CD8-positive, alpha-beta T cell (primary cell): ENCODE measurements at regions of chr16 and their contacts with region 1.

Region 1: GRCh38 chr16:69123910-69124309 is 8.5 kb downstream of the CHTF8 start:
- DNase-seq: peak; percentile 28 to 84 (median 65)
- ATAC-seq: peak; percentile 89
- H3K4me3 ChIP-seq: no peak overlapping the region
- H3K4me3 Mint-ChIP-seq: no peak overlapping the region
- H3K27ac ChIP-seq: no peak overlapping the region
- H3K27ac Mint-ChIP-seq: no peak overlapping the region
- H3K4me1 ChIP-seq: no peaks in the 10 kb centered on the region
- H3K4me1 Mint-ChIP-seq: peaks cover 28% of the 10 kb centered on the region
- H3K27me3 ChIP-seq: no peaks in the 10 kb centered on the region
- H3K27me3 Mint-ChIP-seq: no peaks in the 10 kb centered on the region
- CTCF ChIP-seq: peak; percentile 83

Region 2: DNA sequence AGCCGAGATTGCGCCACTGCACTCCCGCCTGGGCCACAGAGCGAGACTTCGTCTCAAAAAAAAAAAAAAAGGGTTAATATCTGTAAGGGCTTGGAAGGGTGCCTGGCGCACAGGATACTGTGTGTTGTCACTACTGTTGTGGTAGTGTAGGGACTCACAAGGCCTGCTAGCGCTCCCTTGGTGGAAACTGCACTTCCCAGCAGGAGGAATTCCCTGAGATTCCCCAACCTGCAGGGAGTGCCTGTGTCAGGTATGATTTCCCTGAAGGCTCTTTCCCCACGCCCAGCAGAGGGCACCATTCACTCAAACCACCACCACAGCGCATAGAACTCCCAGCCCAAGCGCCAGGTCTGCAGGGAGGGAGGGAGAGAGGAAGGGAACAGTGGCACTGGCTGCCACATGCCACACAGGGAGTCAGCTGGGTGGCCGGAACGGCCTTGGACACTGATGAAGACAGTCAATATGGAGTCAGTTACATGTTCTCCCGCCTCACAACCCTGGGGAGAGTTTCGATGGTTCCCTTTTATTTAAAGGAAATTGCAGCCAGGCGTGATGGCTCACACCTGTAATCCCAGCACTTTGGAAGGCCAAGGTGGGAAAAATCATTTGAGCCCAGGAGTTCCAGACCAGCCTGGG is 419.6 kb before region 1 on chr16:
- CTCF ChIA-PET with region 1: no interaction called
- POLR2A ChIA-PET with region 1: no interaction called
- intact Hi-C with region 1: loop called in 1 of 2 experiments (anchors 1 kb)
- DNase-seq: peak; percentile 5 to 68 (median 49)
- ATAC-seq: peak; percentile 49
- H3K4me3 ChIP-seq: no peak overlapping the region
- H3K4me3 Mint-ChIP-seq: no peak overlapping the region
- H3K27ac ChIP-seq: no peak overlapping the region
- H3K27ac Mint-ChIP-seq: no peak overlapping the region
- H3K4me1 ChIP-seq: no peaks in the 10 kb centered on the region
- H3K4me1 Mint-ChIP-seq: peaks cover 2% of the 10 kb centered on the region
- H3K27me3 ChIP-seq: no peaks in the 10 kb centered on the region
- H3K27me3 Mint-ChIP-seq: no peaks in the 10 kb centered on the region
- CTCF ChIP-seq: peak; percentile 53

Region 3: GRCh38 chr16:68902008-68902968 is 221.6 kb before region 1 on chr16:
- CTCF ChIA-PET with region 1: no interaction called
- POLR2A ChIA-PET with region 1: no interaction called
- intact Hi-C with region 1: loop called in 1 of 2 experiments (anchors 10 kb)
- DNase-seq: peak in 1 of 9 experiments; percentile 7
- ATAC-seq: no peak
- H3K4me3 ChIP-seq: no peak overlapping the region
- H3K4me3 Mint-ChIP-seq: no peak overlapping the region
- H3K27ac ChIP-seq: no peak overlapping the region
- H3K27ac Mint-ChIP-seq: no peak overlapping the region
- H3K4me1 ChIP-seq: no peaks in the 10 kb centered on the region
- H3K4me1 Mint-ChIP-seq: no peaks in the 10 kb centered on the region
- H3K27me3 ChIP-seq: no peaks in the 10 kb centered on the region
- H3K27me3 Mint-ChIP-seq: no peaks in the 10 kb centered on the region
- CTCF ChIP-seq: no peak

Region 4: DNA sequence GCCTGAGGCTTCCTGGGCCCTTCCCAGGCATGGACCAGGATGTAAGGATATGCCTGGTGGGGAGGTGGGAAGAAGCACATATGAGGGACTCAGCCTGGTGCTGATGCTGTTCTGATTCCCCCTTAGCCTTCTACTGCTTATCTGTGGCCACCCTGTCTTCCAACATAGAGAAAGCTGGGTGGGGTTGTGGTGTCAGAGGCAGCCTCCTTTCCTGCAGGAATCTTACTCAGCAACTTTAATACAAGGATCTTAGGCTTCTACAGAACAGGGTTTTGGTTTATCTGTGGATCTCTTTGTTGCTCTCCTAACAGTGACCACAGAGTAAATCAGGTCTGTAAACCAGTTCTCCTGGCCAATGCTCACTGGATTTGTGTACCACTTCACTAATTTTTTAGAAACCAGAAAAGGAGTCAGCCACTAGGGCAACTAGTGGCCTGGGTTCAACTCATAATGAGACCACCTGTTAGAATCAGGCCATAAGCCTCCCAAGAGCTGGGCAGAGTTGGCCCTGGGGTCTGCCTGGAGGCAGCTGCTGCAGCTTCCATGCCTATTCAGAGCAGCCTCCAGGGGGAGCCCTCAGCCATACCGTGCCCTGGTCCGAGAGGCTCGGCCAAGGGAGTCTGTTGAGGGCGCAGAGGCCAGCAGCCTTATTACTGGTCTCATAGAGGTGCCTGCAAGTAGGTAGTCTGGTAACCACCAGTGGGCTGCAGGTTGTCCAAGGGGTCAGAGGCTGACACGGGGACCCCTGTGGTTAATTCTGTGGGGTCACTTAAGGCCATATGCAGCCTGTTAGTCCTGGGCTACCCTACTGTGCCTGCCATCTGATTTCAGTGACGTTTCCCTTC is 11.4 kb before region 1 on chr16:
- CTCF ChIA-PET with region 1: interaction called, 41 read pairs
- POLR2A ChIA-PET with region 1: no interaction called
- intact Hi-C with region 1: loop called in 1 of 2 experiments (anchors 1 kb)
- DNase-seq: peak in 7 of 9 experiments; percentile 26 to 53 (median 50)
- ATAC-seq: peak; percentile 74
- H3K4me3 ChIP-seq: no peak overlapping the region
- H3K4me3 Mint-ChIP-seq: no peak overlapping the region
- H3K27ac ChIP-seq: no peak overlapping the region
- H3K27ac Mint-ChIP-seq: no peak overlapping the region
- H3K4me1 ChIP-seq: peaks cover 8% of the 10 kb centered on the region
- H3K4me1 Mint-ChIP-seq: peaks cover 6% of the 10 kb centered on the region
- H3K27me3 ChIP-seq: peaks cover 0 to 2% of the 10 kb centered on the region in 2 experiments
- H3K27me3 Mint-ChIP-seq: peaks cover 11% of the 10 kb centered on the region
- CTCF ChIP-seq: peak; percentile 42